Dendritic cell treated with granulocyte-macrophage colony-stimulating factor and Interleukin-4, amounts not matched to agents 40 ng/mL and 50 ng/mL, for 4 days (primary cell): ENCODE measurements at regions of chr1 and their contacts with region 1.

Region 1: DNA sequence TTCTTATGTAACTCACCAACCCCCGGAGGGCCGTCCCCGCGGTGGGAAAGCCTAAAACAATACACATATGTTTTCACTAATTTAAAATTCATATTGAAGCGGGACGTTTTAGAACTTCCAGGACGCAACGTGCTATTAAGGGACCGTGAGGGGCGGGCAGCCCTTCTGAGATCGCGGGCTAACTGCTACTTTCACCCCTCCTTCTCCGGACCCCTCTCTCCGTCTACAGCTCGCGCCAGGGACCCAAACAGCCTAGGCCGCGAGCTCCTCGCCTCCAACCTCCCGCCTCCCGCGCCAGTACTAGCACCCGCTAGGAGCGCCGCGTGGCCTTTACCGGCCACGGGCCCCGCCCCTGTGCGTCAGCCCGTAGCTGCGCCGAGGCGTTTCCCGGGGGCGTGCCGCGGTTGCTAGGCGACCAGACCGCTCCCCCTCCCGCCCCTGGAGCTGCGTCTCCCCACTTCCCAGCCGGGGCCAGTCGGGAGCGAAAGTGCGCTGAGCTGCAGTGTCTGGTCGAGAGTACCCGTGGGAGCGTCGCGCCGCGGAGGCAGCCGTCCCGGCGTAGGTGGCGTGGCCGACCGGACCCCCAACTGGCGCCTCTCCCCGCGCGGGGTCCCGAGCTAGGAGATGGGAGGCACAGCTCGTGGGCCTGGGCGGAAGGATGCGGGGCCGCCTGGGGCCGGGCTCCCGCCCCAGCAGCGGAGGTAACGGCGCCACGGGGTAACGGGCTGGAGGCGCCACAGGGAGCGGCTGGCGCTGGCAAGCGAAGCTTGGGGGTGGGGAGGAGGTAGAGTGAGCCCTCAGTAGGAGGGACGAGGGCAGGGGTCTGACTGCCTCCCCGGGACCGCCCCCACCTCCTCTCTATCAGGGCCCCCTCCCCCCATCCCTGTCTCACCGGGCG is at the start of gene DYRK3:
- H3K4me3 Mint-ChIP-seq: peak within 1 kb of the TSS; percentile 89
- H3K27ac Mint-ChIP-seq: peak within 1 kb of the TSS; percentile 49
- H3K4me1 Mint-ChIP-seq: peaks cover 28% of the 10 kb centered on the region
- H3K27me3 Mint-ChIP-seq: peaks cover 33% of the 10 kb centered on the region

Region 2: DNA sequence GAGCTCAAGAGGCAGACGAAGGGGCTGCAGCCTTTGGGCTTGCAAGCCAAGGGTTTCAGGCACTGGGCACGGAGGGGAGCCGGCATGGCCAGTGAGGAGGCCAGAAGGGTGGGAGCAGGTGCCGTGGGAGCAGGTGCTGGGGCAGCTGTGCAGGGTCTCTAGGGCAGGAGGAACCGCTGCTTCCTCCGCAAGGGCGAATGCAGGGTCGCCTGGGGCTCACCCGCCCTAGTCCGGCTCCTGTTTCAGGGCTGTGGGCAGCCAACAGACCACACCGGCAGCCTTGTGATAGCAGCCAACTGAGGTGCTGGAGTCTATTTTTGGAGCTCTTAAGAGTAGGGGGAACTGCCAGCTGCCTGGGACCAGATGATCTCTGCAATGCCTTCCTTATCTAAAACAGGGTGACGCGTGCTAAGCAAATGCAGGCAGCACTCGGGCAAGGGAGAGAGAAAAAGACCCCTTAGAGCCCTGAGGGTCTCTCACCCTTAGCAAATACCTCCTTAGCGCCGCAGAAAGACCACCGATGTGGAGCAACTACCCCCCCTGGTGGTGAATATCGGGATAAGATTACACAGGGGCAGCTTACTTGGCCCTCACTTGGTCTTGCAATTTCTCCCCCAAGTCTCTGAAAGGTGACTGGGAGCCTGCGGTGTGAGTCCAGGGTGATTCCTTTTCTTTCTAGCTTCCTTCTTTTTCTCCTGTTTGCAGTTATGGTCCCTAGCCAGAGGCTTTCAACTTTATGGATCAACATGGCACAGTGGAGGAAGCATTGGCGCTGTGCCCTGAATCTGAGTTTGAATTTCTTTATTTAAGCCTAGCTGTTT is 28.7 kb after region 1 on chr1:
- intact Hi-C with region 1: loop called (anchors 1 kb)
- H3K4me3 Mint-ChIP-seq: no peak overlapping the region
- H3K27ac Mint-ChIP-seq: no peak overlapping the region
- H3K4me1 Mint-ChIP-seq: peaks cover 55% of the 10 kb centered on the region
- H3K27me3 Mint-ChIP-seq: peaks cover 65% of the 10 kb centered on the region

Region 3: DNA sequence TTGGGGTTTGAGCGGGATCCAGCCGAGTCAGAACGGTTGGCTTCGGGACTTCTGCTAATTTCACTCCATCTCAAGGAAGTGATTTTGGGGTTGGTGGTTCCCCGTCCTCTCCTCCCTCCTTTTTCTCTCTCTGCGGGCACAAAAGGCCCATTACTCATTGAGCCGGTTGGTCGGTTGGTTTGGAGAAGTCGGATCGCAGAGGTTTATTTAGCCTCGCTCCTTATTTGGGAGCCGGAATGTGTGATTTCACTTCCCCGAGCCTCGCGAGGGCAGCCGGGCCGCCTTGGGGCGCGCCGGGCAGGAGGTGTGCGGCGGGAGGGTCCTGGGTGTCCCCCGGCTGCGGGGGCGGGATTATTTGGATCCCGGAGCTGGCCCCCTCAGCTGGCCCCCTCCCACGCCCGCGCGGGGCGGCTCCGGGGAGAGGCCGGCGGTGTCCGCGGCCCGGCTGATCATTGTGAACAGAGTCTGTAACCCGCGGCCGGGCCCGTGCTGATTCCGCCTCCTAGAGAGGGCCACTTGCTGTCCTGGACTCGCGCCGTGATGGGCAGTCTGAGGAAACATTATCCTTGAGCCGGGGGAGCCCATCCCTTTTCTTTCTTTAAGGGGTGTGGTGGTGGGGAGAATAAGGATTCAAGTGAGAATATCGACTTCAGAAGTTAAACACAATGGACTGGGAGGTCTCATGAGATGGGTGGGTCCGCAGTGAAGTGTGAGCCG is 50.6 kb after region 1 on chr1:
- intact Hi-C with region 1: loop called (anchors 2 kb)
- H3K4me3 Mint-ChIP-seq: peak overlapping the region; percentile 89
- H3K27ac Mint-ChIP-seq: peak overlapping the region; percentile 88
- H3K4me1 Mint-ChIP-seq: peaks cover 64% of the 10 kb centered on the region
- H3K27me3 Mint-ChIP-seq: peaks cover 28% of the 10 kb centered on the region

Region 4: DNA sequence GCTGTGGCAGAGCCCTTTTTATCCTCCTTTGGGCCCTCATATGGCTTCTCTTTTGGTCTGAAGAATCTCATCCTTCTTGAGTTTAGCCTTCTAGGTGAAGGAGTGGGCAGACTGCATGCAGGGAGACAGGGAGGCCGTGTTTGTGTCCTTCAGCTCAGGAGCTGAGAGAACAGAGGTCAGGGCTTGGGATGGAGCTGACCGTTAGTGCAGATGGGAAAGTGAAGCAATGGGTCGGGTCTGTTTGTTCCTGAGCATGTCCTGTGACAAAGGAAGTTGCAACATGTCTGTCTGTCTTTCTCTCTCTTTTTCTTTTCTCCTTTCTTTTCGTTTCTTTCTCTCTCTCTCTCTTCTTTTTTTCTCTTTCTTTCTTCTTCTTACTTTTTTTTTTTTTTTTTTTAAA is 64.3 kb after region 1 on chr1:
- intact Hi-C with region 1: no loop called
- H3K4me3 Mint-ChIP-seq: no peak overlapping the region
- H3K27ac Mint-ChIP-seq: peak overlapping the region; percentile 28
- H3K4me1 Mint-ChIP-seq: peaks cover 92% of the 10 kb centered on the region
- H3K27me3 Mint-ChIP-seq: no peaks in the 10 kb centered on the region